Breast epithelium (tissue), 4 donors: ENCODE measurements at regions of chrX and their contacts with region 1.

Region 1: DNA sequence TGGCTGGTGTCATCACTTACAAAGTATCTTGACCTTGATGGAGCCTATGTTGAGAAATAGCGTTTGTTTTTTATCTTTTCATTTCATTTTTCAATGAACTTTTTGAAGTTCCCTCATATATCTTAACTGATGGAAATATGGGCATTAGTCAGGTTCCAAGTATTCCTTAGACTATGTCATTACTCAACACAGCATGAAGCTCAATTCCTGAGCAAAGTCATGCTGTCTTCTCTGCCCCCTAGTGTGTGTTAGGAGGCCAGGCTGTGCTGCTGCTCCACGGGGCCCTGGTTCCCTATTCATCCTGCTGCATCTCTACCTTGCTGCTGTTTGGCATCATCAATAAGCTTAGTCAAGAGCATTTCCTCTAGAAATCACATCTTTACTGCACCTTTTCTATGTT is 40.9 kb downstream of the GPR143 start:
- DNase-seq: no peak
- H3K4me3 ChIP-seq: no peak overlapping the region
- H3K27ac ChIP-seq: no peak overlapping the region
- H3K4me1 ChIP-seq: no peaks in the 10 kb centered on the region
- H3K27me3 ChIP-seq: peaks cover 0 to 7% of the 10 kb centered on the region in 2 donors
- CTCF ChIP-seq: no peak
- POLR2A ChIP-seq: no peak

Region 2: GRCh38 chrX:9677098-9677739 is 47.5 kb before region 1 on chrX:
- intact Hi-C with region 1: no loop called
- DNase-seq: no peak
- H3K4me3 ChIP-seq: no peak overlapping the region
- H3K27ac ChIP-seq: no peak overlapping the region
- H3K4me1 ChIP-seq: no peaks in the 10 kb centered on the region
- H3K27me3 ChIP-seq: no peaks in the 10 kb centered on the region
- CTCF ChIP-seq: no peak
- POLR2A ChIP-seq: no peak

Region 3: GRCh38 chrX:9693307-9694001 is 31.3 kb before region 1 on chrX:
- intact Hi-C with region 1: loop called (anchors 1 kb)
- DNase-seq: no peak
- H3K4me3 ChIP-seq: no peak overlapping the region
- H3K27ac ChIP-seq: no peak overlapping the region
- H3K4me1 ChIP-seq: no peaks in the 10 kb centered on the region
- H3K27me3 ChIP-seq: peaks cover 0 to 9% of the 10 kb centered on the region in 2 donors
- CTCF ChIP-seq: no peak
- POLR2A ChIP-seq: no peak